Lower leg skin (tissue), 4 donors: ENCODE measurements at regions of chr12 and their contacts with region 1.

Region 1: GRCh38 chr12:98743347-98743953 is 98.4 kb downstream of the APAF1 start:
- DNase-seq: no peak
- H3K4me3 ChIP-seq: no peak overlapping the region
- CTCF ChIP-seq: no peak
- POLR2A ChIP-seq: no peak

Region 2: DNA sequence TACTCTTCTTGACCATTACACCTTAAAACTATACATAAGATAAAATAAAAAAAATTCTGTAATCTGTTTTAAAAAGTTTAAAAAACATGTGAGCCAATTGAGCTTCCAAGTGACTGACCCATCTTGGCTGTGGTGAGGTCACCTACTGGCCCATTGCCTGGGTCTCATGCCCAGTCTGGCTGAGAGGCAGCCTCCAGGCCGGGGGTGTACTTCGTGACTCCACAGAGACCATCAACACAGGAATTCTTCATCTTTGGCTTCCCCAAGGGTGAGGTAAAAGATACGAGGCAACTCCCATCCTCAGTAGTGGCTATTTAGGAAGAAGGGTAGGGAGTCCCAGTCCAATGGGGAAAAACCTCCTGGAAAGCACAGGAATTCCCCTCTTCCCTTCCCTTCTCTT is 14.9 kb after region 1 on chr12:
- intact Hi-C with region 1: loop called (anchors 2 kb)
- DNase-seq: no peak
- H3K4me3 ChIP-seq: no peak overlapping the region
- CTCF ChIP-seq: no peak
- POLR2A ChIP-seq: no peak

Region 3: GRCh38 chr12:98873776-98874175 is 130.3 kb after region 1 on chr12:
- intact Hi-C with region 1: no loop called
- DNase-seq: no peak
- H3K4me3 ChIP-seq: no peak overlapping the region
- CTCF ChIP-seq: no peak
- POLR2A ChIP-seq: no peak